Caco-2 (cell line): ENCODE measurements at regions of chr2 and their contacts with region 1.

Region 1: GRCh38 chr2:61949714-61950560 is 44.5 kb downstream of the COMMD1 start:
- DNase-seq: no peak
- H3K4me3 ChIP-seq: no peak overlapping the region
- H3K4me3 Mint-ChIP-seq: no peak overlapping the region
- H3K27ac Mint-ChIP-seq: peak overlapping the region; percentile 73
- H3K4me1 ChIP-seq: peaks cover 62% of the 10 kb centered on the region
- H3K4me1 Mint-ChIP-seq: peaks cover 38% of the 10 kb centered on the region
- H3K27me3 ChIP-seq: no peaks in the 10 kb centered on the region
- H3K27me3 Mint-ChIP-seq: no peaks in the 10 kb centered on the region
- CTCF ChIP-seq: no peak

Region 2: GRCh38 chr2:61928826-61929461 is 21.0 kb before region 1 on chr2:
- CTCF ChIA-PET with region 1: no interaction called
- POLR2A ChIA-PET with region 1: no interaction called
- intact Hi-C with region 1: loop called (anchors 1 kb)
- DNase-seq: peak; percentile 74 to 76
- H3K4me3 ChIP-seq: no peak overlapping the region
- H3K4me3 Mint-ChIP-seq: no peak overlapping the region
- H3K27ac Mint-ChIP-seq: peak overlapping the region; percentile 56
- H3K4me1 ChIP-seq: peaks cover 34% of the 10 kb centered on the region
- H3K4me1 Mint-ChIP-seq: peaks cover 29% of the 10 kb centered on the region
- H3K27me3 ChIP-seq: no peaks in the 10 kb centered on the region
- H3K27me3 Mint-ChIP-seq: no peaks in the 10 kb centered on the region
- CTCF ChIP-seq: no peak

Region 3: GRCh38 chr2:61962095-61962984 is 12.4 kb after region 1 on chr2:
- CTCF ChIA-PET with region 1: no interaction called
- POLR2A ChIA-PET with region 1: no interaction called
- intact Hi-C with region 1: loop called (anchors 2 kb)
- DNase-seq: peak; percentile 67 to 77
- H3K4me3 ChIP-seq: no peak overlapping the region
- H3K4me3 Mint-ChIP-seq: peak overlapping the region; percentile 44
- H3K27ac Mint-ChIP-seq: peak overlapping the region; percentile 87
- H3K4me1 ChIP-seq: peaks cover 53% of the 10 kb centered on the region
- H3K4me1 Mint-ChIP-seq: peaks cover 27% of the 10 kb centered on the region
- H3K27me3 ChIP-seq: no peaks in the 10 kb centered on the region
- H3K27me3 Mint-ChIP-seq: no peaks in the 10 kb centered on the region
- CTCF ChIP-seq: no peak

Region 4: GRCh38 chr2:62391696-62392095 is 441.8 kb after region 1 on chr2:
- CTCF ChIA-PET with region 1: no interaction called
- POLR2A ChIA-PET with region 1: no interaction called
- intact Hi-C with region 1: no loop called
- DNase-seq: no peak
- H3K4me3 ChIP-seq: no peak overlapping the region
- H3K4me3 Mint-ChIP-seq: no peak overlapping the region
- H3K27ac Mint-ChIP-seq: no peak overlapping the region
- H3K4me1 ChIP-seq: no peaks in the 10 kb centered on the region
- H3K4me1 Mint-ChIP-seq: no peaks in the 10 kb centered on the region
- H3K27me3 ChIP-seq: no peaks in the 10 kb centered on the region
- H3K27me3 Mint-ChIP-seq: no peaks in the 10 kb centered on the region
- CTCF ChIP-seq: no peak